Activated CD4-positive, alpha-beta memory T cell treated with anti-CD3 and anti-CD28 coated beads for 36 hours (primary cell): ENCODE measurements at regions of chr11 and their contacts with region 1.

Region 1: GRCh38 chr11:64652586-64653387 is 61.8 kb downstream of the SLC22A12 start:
- DNase-seq: peak; percentile 83
- H3K4me3 Mint-ChIP-seq: no peak overlapping the region
- H3K27ac Mint-ChIP-seq: no peak overlapping the region
- H3K4me1 Mint-ChIP-seq: peaks cover 6% of the 10 kb centered on the region
- H3K27me3 Mint-ChIP-seq: peaks cover 3% of the 10 kb centered on the region

Region 2: DNA sequence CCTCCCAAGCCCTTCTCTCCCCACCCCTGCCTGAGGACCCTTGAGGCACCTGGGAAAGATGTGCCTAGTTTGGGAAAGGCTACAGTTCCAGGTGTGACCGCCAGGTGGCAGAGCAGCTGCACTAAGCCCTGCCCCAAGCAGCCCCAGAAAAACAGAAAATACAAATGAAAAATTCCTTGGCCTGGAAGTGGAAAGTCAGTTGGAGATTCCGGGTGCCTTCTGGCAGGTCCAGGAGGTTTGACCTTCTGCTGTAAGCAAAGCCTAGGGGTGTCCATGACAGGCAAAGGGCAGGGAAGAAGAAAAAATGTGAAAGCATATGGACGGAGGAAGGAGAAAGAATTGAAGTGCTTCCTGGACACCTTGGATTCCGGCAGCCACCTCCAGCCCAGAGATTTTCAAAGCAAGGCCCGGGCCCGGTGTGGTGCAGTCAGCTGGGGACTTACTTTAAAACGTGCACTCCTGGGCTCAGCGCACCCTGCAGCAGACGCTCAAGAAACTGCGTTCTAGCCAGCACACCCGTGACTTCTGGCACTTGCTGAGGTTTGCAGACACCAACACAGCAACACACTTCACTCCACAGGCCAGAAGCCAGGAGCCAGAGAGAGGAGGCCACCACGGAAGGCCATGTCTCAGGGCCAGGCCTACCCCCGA is 99.1 kb before region 1 on chr11:
- CTCF ChIA-PET with region 1: interaction called, 3 read pairs
- POLR2A ChIA-PET with region 1: no interaction called
- intact Hi-C with region 1: loop called (anchors 1 kb)
- DNase-seq: peak; percentile 63
- H3K4me3 Mint-ChIP-seq: no peak overlapping the region
- H3K27ac Mint-ChIP-seq: no peak overlapping the region
- H3K4me1 Mint-ChIP-seq: no peaks in the 10 kb centered on the region
- H3K27me3 Mint-ChIP-seq: peaks cover 2% of the 10 kb centered on the region

Region 3: DNA sequence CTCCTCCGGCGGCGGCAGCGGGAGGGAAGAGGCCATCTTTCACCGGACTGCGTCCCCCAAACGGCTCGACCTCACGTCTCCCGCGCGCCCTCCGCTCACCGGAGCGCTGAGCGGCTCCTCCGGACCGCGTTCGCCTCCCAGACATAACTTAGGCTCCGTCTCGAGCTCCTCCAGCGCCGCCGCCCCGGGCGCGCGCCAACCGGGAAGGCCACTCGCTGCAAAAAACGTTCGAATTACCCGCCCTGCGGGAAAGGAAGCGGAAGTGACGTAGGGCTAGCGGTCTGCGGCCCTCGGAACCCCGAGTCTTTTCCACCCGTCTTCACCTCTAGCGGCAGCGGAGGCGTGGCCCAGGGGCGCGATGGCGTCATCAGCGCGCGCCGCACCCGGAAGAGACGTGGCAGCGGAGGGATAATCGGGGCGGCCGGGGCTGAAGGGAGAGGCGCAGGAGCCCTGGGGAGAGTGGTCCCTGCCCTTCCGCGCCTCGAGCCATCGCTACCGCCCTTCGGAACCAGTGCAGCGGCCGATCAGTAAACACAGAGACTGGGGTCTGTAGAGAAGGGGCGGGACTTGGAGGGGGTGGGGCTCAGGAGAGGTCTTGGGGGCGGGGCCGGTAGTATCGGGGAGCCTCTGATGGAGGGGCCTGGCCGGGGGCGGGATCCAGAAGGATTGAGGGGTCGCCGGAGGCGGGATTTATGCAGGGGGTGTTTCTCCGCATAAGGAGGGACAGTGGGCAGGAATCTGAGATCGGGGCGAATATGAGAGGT is 431.2 kb after region 1 on chr11 and contains the starts of genes CDCA5 and ZFPL1:
- CTCF ChIA-PET with region 1: no interaction called
- POLR2A ChIA-PET with region 1: no interaction called
- intact Hi-C with region 1: no loop called
- DNase-seq: peak; percentile 97
- H3K4me3 Mint-ChIP-seq: peak within 1 kb of the TSS; percentile 99
- H3K27ac Mint-ChIP-seq: peak within 1 kb of the TSS; percentile 96
- H3K4me1 Mint-ChIP-seq: peaks cover 36% of the 10 kb centered on the region
- H3K27me3 Mint-ChIP-seq: no peaks in the 10 kb centered on the region
- total RNA-seq, gene CDCA5: 111 to 112 TPM
- total RNA-seq, gene ZFPL1: 28.3 to 31.3 TPM